Endothelial cell of umbilical vein (primary cell): ENCODE measurements at regions of chr12 and their contacts with region 1.

Region 1: DNA sequence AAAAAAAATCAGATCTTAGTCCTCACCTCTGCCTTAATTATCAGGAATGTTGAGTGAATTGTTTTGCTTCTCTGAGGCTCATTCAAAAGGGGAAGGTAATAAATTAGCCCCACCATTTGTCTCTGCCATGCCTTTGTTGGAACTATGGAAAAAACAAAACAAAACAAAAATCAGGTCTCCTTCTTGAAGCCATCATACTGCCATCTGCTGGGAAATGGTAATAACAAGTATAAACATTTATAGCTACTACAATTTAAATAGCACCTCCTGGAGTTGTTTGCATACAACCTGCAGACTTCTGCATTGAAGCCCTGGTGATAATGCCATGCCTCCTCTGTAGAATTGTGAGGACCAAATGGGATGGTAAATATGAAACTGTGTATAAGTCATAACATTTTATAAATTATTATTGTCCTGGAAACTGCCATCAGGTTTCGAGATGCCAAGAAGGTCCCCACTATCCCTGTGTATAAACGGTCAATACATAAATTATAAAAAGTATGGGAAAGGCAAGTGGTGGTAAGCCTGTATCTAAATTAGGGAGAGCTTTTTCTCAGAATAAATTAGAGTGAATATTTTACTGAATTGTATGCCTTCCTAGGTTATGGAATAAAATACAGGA is 87.2 kb upstream of the FGD4 start:
- DNase-seq: peak; percentile 85
- H3K4me3 ChIP-seq: no peak overlapping the region
- H3K27ac ChIP-seq: peak overlapping the region; percentile 22
- H3K4me1 ChIP-seq: peaks cover 10% of the 10 kb centered on the region
- H3K27me3 ChIP-seq: no peaks in the 10 kb centered on the region
- CTCF ChIP-seq: peak; percentile 33 to 39
- POLR2A ChIP-seq: no peak

Region 2: GRCh38 chr12:31659087-31659933 is 652.9 kb before region 1 on chr12 and contains the start of gene ETFBKMT:
- CTCF ChIA-PET with region 1: interaction called, 140 read pairs
- POLR2A ChIA-PET with region 1: interaction called, 4 read pairs
- dilution Hi-C with region 1: no loop called
- intact Hi-C with region 1: no loop called
- DNase-seq: peak; percentile 89
- H3K4me3 ChIP-seq: peak within 1 kb of the TSS; percentile 75 to 87 (median 81)
- H3K27ac ChIP-seq: peak within 1 kb of the TSS; percentile 87
- H3K4me1 ChIP-seq: peaks cover 4% of the 10 kb centered on the region
- H3K27me3 ChIP-seq: no peaks in the 10 kb centered on the region
- CTCF ChIP-seq: peak; percentile 30 to 38
- POLR2A ChIP-seq: peak; percentile 86
- total RNA-seq, gene ETFBKMT: 2.4 and 3.1 TPM in 2 replicates

Region 3: GRCh38 chr12:31874961-31875608 is 437.1 kb before region 1 on chr12:
- CTCF ChIA-PET with region 1: interaction called, 4 read pairs
- POLR2A ChIA-PET with region 1: no interaction called
- dilution Hi-C with region 1: no loop called
- intact Hi-C with region 1: loop called (anchors 10 kb)
- DNase-seq: peak; percentile 93
- H3K4me3 ChIP-seq: no peak overlapping the region
- H3K27ac ChIP-seq: peak overlapping the region; percentile 83
- H3K4me1 ChIP-seq: peaks cover 28% of the 10 kb centered on the region
- H3K27me3 ChIP-seq: no peaks in the 10 kb centered on the region
- CTCF ChIP-seq: no peak
- POLR2A ChIP-seq: no peak

Region 4: DNA sequence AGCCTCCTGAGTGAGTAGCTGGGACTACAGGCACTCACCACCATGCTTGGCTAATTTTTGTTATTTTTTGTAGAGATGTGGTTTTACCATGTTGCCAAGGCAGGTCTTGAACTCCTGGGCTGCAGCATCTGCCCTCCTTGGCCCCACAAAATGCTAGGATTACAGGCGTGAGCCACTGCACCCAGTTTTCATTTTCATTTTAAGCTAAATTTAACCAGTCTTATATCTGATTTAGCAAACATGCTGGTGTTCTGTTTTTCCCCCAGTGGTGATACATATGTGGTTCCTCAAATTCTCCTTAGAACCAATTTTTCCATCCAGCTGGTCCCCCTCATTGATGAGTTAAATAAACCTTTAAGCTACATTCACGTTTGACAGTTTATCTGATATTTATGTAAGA is 249.3 kb before region 1 on chr12:
- CTCF ChIA-PET with region 1: interaction called, 90 read pairs
- POLR2A ChIA-PET with region 1: no interaction called
- dilution Hi-C with region 1: no loop called
- intact Hi-C with region 1: loop called (anchors 1 kb)
- DNase-seq: no peak
- H3K4me3 ChIP-seq: no peak overlapping the region
- H3K27ac ChIP-seq: no peak overlapping the region
- H3K4me1 ChIP-seq: no peaks in the 10 kb centered on the region
- H3K27me3 ChIP-seq: peaks cover 0 to 2% of the 10 kb centered on the region in 2 experiments
- CTCF ChIP-seq: no peak
- POLR2A ChIP-seq: no peak

Region 5: DNA sequence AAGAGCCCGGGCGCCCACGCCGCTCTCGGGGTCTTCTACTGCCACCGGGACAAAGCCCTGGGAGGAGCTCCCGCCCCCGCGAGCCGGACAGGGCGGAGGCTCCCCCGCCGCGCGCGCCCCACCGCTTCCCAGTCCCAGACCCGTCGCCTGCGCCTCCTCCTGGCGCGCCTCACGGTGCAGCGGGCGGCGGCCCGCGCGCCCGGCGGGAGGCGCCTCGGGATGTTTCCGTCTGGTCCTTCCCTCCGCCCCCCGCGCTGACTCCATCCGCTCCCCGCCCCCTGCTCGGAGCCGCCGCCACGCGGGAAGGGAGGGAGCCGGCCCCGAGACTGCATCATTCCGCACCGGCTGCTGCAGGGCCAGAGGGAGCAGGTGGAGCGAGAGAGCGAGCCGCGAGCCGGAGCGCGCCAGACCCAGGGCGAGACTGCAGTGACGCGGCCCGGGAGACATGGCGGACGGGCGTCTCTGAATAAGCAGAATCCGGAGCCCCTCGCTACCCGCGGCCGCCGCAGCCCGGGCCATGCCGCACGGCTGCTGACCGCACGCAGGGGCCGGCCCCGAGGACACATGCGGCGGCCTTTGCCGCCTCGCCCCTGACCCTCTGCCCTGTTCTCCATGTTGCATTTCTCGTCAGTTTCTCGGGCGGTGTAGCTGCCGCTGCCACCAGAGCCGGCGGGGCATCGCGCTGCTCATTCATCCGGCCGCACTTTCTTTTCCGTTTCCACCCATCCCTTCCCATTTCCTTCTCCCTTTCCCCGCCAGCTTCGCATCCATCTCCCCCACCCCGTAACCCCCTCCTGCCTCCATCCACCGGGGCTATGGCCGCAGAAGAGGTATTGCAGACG is 205.4 kb before region 1 on chr12 and contains the start of gene BICD1:
- CTCF ChIA-PET with region 1: interaction called, 20 read pairs
- POLR2A ChIA-PET with region 1: no interaction called
- dilution Hi-C with region 1: no loop called
- intact Hi-C with region 1: no loop called
- DNase-seq: peak; percentile 92
- H3K4me3 ChIP-seq: peak within 1 kb of the TSS; percentile 58 to 84 (median 67)
- H3K27ac ChIP-seq: peak within 1 kb of the TSS; percentile 69
- H3K4me1 ChIP-seq: peaks cover 14% of the 10 kb centered on the region
- H3K27me3 ChIP-seq: no peaks in the 10 kb centered on the region
- CTCF ChIP-seq: peak; percentile 20 to 40
- POLR2A ChIP-seq: peak; percentile 76
- total RNA-seq, gene BICD1: 45.8 and 51.0 TPM in 2 replicates

Region 6: DNA sequence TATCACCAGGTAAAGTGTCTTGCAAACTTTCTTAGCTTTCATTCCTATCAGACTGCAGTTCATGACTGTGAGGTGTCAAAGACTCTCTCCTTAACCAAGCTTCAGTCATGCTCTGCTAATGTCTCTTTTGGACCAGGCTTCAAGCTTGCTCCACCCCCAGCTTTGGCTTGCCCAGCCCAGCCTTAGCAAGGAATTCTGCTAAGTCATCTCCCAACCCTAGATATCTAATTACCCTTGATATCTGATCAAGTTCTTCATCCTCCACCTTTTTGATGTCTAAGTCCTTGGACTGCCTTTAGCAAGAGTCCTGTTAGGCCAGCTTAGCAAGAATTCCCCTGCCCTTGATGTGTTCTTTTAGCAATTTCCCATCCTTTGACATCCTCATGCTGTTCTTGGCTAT is 21.7 kb before region 1 on chr12:
- CTCF ChIA-PET with region 1: interaction called, 11 read pairs
- POLR2A ChIA-PET with region 1: interaction called, 3 read pairs
- dilution Hi-C with region 1: no loop called
- intact Hi-C with region 1: no loop called
- DNase-seq: no peak
- H3K4me3 ChIP-seq: no peak overlapping the region
- H3K27ac ChIP-seq: no peak overlapping the region
- H3K4me1 ChIP-seq: no peaks in the 10 kb centered on the region
- H3K27me3 ChIP-seq: no peaks in the 10 kb centered on the region
- CTCF ChIP-seq: no peak
- POLR2A ChIP-seq: no peak

Region 7: GRCh38 chr12:32322354-32322753 is 10.2 kb after region 1 on chr12:
- CTCF ChIA-PET with region 1: interaction called, 14 read pairs
- POLR2A ChIA-PET with region 1: no interaction called
- dilution Hi-C with region 1: no loop called
- intact Hi-C with region 1: no loop called
- DNase-seq: no peak
- H3K4me3 ChIP-seq: no peak overlapping the region
- H3K27ac ChIP-seq: no peak overlapping the region
- H3K4me1 ChIP-seq: no peaks in the 10 kb centered on the region
- H3K27me3 ChIP-seq: no peaks in the 10 kb centered on the region
- CTCF ChIP-seq: no peak
- POLR2A ChIP-seq: no peak